Sigmoid colon (tissue), 7 donors: ENCODE measurements at regions of chr6 and their contacts with region 1.

Region 1: GRCh38 chr6:31680840-31681671 is at the start of gene LY6G5C:
- DNase-seq: peak; percentile 95
- H3K4me3 ChIP-seq: peak within 1 kb of the TSS; percentile 29 to 63 (median 53)
- H3K27ac ChIP-seq: peak within 1 kb of the TSS; percentile 66 to 83 (median 73)
- H3K4me1 ChIP-seq: peaks cover 0 to 21% (median 13%) of the 10 kb centered on the region in 4 donors
- H3K27me3 ChIP-seq: no peaks in the 10 kb centered on the region
- CTCF ChIP-seq: peak; percentile 37 to 68 (median 61)
- EP300 ChIP-seq: no peak
- POLR2A ChIP-seq: no peak
- total RNA-seq, gene LY6G5C: 0.68 to 1.1 (median 0.99) TPM in 3 of 4 donors, not detected in the other

Region 2: GRCh38 chr6:31474871-31475286 is 206.2 kb before region 1 on chr6:
- intact Hi-C with region 1: no loop called
- DNase-seq: peak; percentile 27
- H3K4me3 ChIP-seq: no peak overlapping the region
- H3K27ac ChIP-seq: no peak overlapping the region
- H3K4me1 ChIP-seq: no peaks in the 10 kb centered on the region
- H3K27me3 ChIP-seq: peaks cover 0 to 9% (median 0%) of the 10 kb centered on the region in 3 donors
- CTCF ChIP-seq: no peak
- EP300 ChIP-seq: no peak
- POLR2A ChIP-seq: no peak

Region 3: GRCh38 chr6:31729515-31729978 is 48.5 kb after region 1 on chr6:
- intact Hi-C with region 1: loop called (anchors 5 kb)
- DNase-seq: peak; percentile 97
- H3K4me3 ChIP-seq: peak overlapping the region; percentile 78 to 95 (median 84)
- H3K27ac ChIP-seq: peak overlapping the region; percentile 96 to 99 (median 98)
- H3K4me1 ChIP-seq: peaks cover 0 to 39% (median 33%) of the 10 kb centered on the region in 4 donors
- H3K27me3 ChIP-seq: no peaks in the 10 kb centered on the region
- CTCF ChIP-seq: peak in 1 of 4 experiments; percentile 25
- EP300 ChIP-seq: no peak
- POLR2A ChIP-seq: peak; percentile 23 to 29

Region 4: GRCh38 chr6:31769684-31770371 is 88.8 kb after region 1 on chr6:
- intact Hi-C with region 1: loop called (anchors 1 kb)
- DNase-seq: peak; percentile 80
- H3K4me3 ChIP-seq: no peak overlapping the region
- H3K27ac ChIP-seq: no peak overlapping the region
- H3K4me1 ChIP-seq: peaks cover 0 to 10% (median 7%) of the 10 kb centered on the region in 4 donors
- H3K27me3 ChIP-seq: peaks cover 0 to 14% (median 3%) of the 10 kb centered on the region in 3 donors
- CTCF ChIP-seq: peak; percentile 32 to 83 (median 70)
- EP300 ChIP-seq: no peak
- POLR2A ChIP-seq: no peak

Region 5: GRCh38 chr6:31827286-31828079 is 146.4 kb after region 1 on chr6 and contains the start of gene HSPA1B:
- intact Hi-C with region 1: loop called (anchors 1 kb)
- DNase-seq: peak; percentile 100
- H3K4me3 ChIP-seq: peak within 1 kb of the TSS; percentile 60 to 74 (median 68)
- H3K27ac ChIP-seq: peak within 1 kb of the TSS; percentile 86 to 98 (median 95)
- H3K4me1 ChIP-seq: peaks cover 0 to 49% (median 45%) of the 10 kb centered on the region in 4 donors
- H3K27me3 ChIP-seq: no peaks in the 10 kb centered on the region
- CTCF ChIP-seq: no peak
- EP300 ChIP-seq: peak in 1 of 4 donors; percentile 93
- POLR2A ChIP-seq: peak; percentile 100
- total RNA-seq, gene HSPA1B: 72.6 to 237 (median 113) TPM

Region 6: DNA sequence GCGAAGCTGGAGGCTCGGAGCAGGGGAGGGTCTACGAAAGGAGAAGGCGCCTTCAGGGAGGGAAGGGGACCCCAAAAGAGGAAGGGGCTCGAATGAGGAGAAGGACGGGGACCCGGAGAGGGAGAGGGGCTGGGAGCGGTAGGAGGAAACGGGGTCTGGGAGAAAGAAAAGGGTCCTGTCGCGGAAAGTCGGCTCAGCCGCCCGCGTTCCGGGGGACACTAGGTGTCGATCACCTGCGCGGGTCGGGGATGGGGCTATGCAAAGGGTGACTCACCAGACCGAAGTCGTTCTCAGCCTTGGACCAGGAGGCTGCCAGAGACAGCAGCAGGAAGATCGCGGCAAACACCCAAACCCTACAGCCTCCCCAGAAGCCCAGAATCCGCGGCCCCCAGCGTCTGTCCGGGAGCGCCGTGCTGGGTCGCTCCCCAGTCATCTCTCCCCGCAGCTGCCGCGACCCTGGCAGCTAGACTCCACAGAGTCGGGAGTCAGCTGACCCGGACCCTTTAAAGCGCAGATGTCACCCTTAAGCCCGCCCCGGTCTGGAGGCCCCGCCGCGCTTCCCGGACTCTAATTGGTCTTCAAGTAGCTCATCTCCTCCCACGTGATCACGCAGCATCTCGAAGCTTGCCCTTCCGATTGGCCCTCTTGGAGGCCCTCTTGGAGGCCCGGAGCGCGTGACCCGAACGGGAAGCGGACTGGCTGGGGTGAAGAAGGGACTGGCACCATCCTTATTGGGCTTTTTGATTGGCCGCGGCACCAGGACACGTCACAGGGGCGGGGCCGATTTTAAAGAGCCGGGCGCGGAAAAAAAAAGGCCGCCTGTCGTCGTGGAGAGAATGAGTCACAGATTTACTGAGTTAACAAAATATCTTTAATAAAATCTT is 181.5 kb after region 1 on chr6 and contains the start of gene NEU1:
- intact Hi-C with region 1: loop called (anchors 1 kb)
- DNase-seq: peak; percentile 100
- H3K4me3 ChIP-seq: peak within 1 kb of the TSS; percentile 60 to 74 (median 68)
- H3K27ac ChIP-seq: peak within 1 kb of the TSS; percentile 84 to 89 (median 88)
- H3K4me1 ChIP-seq: peaks cover 0 to 25% (median 15%) of the 10 kb centered on the region in 4 donors
- H3K27me3 ChIP-seq: no peaks in the 10 kb centered on the region
- CTCF ChIP-seq: no peak
- EP300 ChIP-seq: peak in 2 of 4 donors; percentile 7 to 61
- POLR2A ChIP-seq: peak; percentile 97
- total RNA-seq, gene NEU1: 31.3 to 43.2 (median 33.6) TPM

Region 7: DNA sequence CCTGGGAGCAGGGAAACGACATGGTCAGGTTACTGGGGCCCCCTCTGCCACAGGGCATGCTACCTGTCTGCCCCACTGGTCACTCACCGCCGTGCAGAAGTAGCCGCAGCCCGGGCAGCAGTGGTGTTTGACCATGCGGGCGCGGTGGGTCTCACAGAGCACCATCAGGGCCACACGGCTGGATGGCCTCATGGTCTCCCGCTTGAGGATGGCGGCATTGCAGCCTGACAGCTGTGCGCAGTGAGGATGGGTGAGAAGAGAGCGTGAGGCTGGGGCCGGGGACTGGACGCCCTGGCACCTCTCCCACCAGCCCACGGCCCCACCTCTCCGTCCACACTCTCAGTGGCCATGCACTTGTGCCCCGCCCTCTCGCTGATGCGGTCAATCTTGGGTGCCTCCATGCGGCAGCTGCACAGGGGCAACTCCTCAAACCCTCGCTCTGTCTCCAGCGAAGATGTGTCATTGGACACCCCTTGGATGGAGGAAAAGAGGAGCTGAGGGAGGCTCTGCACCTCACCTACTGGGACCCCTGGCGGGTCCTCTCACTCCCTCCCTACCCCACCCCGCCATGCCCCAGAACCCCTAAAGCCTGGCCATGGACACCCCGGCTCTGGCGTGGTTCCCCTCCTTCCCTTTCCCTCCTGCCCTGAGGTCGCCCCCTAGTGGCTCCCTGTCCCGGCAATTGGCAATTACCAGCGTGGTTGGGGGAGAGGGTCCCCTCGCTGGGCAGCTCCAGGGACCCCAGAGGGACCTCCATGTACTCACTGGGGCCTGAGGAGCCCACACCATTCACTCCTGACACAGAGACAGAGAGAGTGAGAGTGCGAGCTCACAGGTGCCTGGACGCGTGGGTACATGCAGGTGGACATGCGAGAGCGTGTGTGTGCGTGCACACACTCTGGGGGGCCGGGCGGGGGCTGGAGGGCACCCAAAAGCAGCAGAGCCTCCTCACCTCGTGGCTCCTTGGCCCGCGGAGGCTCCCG is 207.5 kb after region 1 on chr6:
- intact Hi-C with region 1: loop called (anchors 2 kb)
- DNase-seq: no peak
- H3K4me3 ChIP-seq: no peak overlapping the region
- H3K27ac ChIP-seq: no peak overlapping the region
- H3K4me1 ChIP-seq: no peaks in the 10 kb centered on the region
- H3K27me3 ChIP-seq: no peaks in the 10 kb centered on the region
- CTCF ChIP-seq: peak in 3 of 4 experiments; percentile 47 to 79 (median 58)
- EP300 ChIP-seq: no peak
- POLR2A ChIP-seq: no peak

Region 8: GRCh38 chr6:31952140-31952805 is 271.2 kb after region 1 on chr6:
- intact Hi-C with region 1: loop called (anchors 5 kb)
- DNase-seq: peak; percentile 76
- H3K4me3 ChIP-seq: no peak overlapping the region
- H3K27ac ChIP-seq: peak overlapping the region in 3 of 4 donors; percentile 36 to 50 (median 47)
- H3K4me1 ChIP-seq: peaks cover 0 to 4% (median under 1%) of the 10 kb centered on the region in 4 donors
- H3K27me3 ChIP-seq: no peaks in the 10 kb centered on the region
- CTCF ChIP-seq: peak; percentile 30 to 65 (median 62)
- EP300 ChIP-seq: no peak
- POLR2A ChIP-seq: no peak